B cell (primary cell): ENCODE measurements at regions of chr7 and their contacts with region 1.

Region 1: DNA sequence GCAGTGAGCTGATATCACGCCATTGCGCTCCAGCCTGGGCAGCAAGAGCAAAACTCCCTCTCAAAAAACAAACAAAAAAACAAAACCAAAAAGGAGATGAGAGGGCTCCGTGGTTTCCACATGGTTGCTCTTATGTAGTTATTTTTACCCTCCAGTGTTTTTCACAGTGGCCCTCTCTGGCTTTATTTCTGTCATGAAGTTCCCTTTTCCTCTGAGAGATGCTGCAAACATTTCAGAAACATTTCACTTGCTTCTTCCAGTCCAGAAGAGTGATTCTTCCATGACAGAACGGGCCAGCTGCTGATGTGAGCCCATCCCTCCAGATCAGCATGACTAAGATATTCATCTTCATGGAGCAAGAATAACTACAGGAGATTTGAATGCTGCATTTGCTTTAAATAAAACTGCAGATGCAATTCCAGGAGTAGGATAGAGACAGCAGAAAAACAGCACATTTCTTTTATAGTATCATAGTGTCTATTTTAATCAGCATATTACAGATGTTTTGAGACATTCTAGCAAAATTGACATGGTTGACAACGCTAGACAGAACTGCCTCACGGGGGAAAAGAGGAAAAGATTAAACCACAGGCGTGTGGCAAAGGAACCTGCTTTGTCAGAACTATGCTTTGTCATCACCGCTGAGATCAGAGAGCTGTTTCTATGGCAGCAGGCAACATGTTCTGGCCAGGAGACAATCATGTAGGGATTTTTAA is 40.3 kb downstream of the NRCAM start:
- DNase-seq: peak; percentile 77
- ATAC-seq: peak; percentile 73
- H3K4me3 ChIP-seq: peak overlapping the region in 3 of 5 experiments; percentile 12 to 47 (median 27)
- H3K4me3 Mint-ChIP-seq: peak overlapping the region; percentile 81
- H3K27ac ChIP-seq: peak overlapping the region; percentile 57 to 73
- H3K27ac Mint-ChIP-seq: peak overlapping the region; percentile 85
- H3K4me1 ChIP-seq: peaks cover 43 to 56% of the 10 kb centered on the region in 2 donors
- H3K4me1 Mint-ChIP-seq: peaks cover 54% of the 10 kb centered on the region
- H3K27me3 ChIP-seq: peaks cover 0 to 27% (median 11%) of the 10 kb centered on the region in 4 experiments
- H3K27me3 Mint-ChIP-seq: peaks cover 6% of the 10 kb centered on the region
- CTCF ChIP-seq: no peak

Region 2: GRCh38 chr7:108328174-108328651 is 87.8 kb before region 1 on chr7:
- CTCF ChIA-PET with region 1: no interaction called
- POLR2A ChIA-PET with region 1: no interaction called
- intact Hi-C with region 1: loop called (anchors 10 kb)
- DNase-seq: peak; percentile 3
- ATAC-seq: peak; percentile 76
- H3K4me3 ChIP-seq: peak overlapping the region in 2 of 5 experiments; percentile 16 to 18
- H3K4me3 Mint-ChIP-seq: peak overlapping the region; percentile 78
- H3K27ac ChIP-seq: peak overlapping the region; percentile 55 to 59
- H3K27ac Mint-ChIP-seq: peak overlapping the region; percentile 87
- H3K4me1 ChIP-seq: peaks cover 0 to 8% of the 10 kb centered on the region in 2 donors
- H3K4me1 Mint-ChIP-seq: peaks cover 32% of the 10 kb centered on the region
- H3K27me3 ChIP-seq: no peaks in the 10 kb centered on the region
- H3K27me3 Mint-ChIP-seq: no peaks in the 10 kb centered on the region
- CTCF ChIP-seq: no peak